ENCODE measurements at regions of chr1 and their contacts with region 1.

Region 1: GRCh38 chr1:235597867-235598553 is 51.6 kb downstream of the GNG4 start:
- H3K4me3 ChIP-seq: no peak overlapping the region
- H3K27ac ChIP-seq: no peak overlapping the region
- H3K4me1 ChIP-seq: no peaks in the 10 kb centered on the region
- CTCF ChIP-seq: peak; percentile 27; the same call in 1 of the 2 replicates

Region 2: GRCh38 chr1:235513495-235514366 is 84.3 kb before region 1 on chr1:
- CTCF ChIA-PET with region 1: interaction called, 23 read pairs
- POLR2A ChIA-PET with region 1: no interaction called
- H3K4me3 ChIP-seq: no peak overlapping the region
- H3K27ac ChIP-seq: no peak overlapping the region
- H3K4me1 ChIP-seq: no peaks in the 10 kb centered on the region
- CTCF ChIP-seq: peak; percentile 61; the same call in 1 of the 2 replicates

Region 3: DNA sequence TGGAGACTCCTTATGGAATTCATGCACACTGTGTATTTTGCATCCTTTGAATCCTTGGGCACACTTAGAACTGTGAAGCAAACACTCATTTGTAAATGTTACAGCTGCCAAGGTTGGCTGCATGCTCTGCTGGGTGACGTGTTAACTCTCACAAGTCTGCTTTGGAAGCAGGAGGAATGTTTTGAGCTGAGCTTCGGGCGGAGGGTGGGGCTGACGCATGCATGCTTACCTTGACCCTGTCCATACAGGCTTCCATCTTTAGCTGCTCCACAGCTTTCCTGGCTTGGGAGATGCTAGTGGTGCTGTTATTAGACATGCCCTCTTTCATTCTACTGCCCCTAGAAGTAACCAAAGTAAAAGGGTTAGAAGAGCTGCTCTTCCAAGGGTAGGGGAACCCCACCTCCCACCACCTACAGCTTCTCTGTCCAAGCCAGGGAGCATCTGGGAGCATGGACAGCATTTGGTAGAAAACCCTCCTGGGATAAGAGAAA is 14.5 kb before region 1 on chr1:
- CTCF ChIA-PET with region 1: interaction called, 12 read pairs
- POLR2A ChIA-PET with region 1: no interaction called
- H3K4me3 ChIP-seq: no peak overlapping the region
- H3K27ac ChIP-seq: no peak overlapping the region
- H3K4me1 ChIP-seq: no peaks in the 10 kb centered on the region
- CTCF ChIP-seq: no peak

Region 4: GRCh38 chr1:235614442-235614954 is 16.5 kb after region 1 on chr1:
- CTCF ChIA-PET with region 1: interaction called, 20 read pairs
- POLR2A ChIA-PET with region 1: no interaction called
- H3K4me3 ChIP-seq: no peak overlapping the region
- H3K27ac ChIP-seq: no peak overlapping the region
- H3K4me1 ChIP-seq: no peaks in the 10 kb centered on the region
- CTCF ChIP-seq: no peak

Region 5: DNA sequence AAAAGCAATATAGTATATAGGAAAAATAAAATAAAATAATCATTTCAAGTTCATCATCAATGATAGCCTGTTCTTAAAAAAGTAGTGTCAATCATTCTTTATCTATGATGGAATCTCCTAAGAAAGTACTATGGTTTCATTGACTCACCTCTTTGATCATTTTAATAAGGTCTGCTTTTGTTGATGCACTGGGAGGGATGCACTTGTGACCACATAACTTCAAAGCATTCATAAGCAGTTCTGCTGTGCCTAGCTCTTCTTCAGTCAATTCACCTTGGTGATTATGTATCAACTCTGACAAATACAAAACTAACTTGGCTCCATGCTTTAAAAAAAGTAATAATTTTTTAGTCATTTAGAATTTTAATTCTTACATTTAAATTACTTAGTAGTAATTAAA is 136.3 kb after region 1 on chr1:
- CTCF ChIA-PET with region 1: interaction called, 11 read pairs
- POLR2A ChIA-PET with region 1: interaction called, 7 read pairs
- H3K4me3 ChIP-seq: no peak overlapping the region
- H3K27ac ChIP-seq: no peak overlapping the region
- H3K4me1 ChIP-seq: peaks cover 5% of the 10 kb centered on the region; the same call in 1 of the 2 replicates
- CTCF ChIP-seq: no peak